ENCODE measurements at regions of chr13 and their contacts with region 1.

Region 1: DNA sequence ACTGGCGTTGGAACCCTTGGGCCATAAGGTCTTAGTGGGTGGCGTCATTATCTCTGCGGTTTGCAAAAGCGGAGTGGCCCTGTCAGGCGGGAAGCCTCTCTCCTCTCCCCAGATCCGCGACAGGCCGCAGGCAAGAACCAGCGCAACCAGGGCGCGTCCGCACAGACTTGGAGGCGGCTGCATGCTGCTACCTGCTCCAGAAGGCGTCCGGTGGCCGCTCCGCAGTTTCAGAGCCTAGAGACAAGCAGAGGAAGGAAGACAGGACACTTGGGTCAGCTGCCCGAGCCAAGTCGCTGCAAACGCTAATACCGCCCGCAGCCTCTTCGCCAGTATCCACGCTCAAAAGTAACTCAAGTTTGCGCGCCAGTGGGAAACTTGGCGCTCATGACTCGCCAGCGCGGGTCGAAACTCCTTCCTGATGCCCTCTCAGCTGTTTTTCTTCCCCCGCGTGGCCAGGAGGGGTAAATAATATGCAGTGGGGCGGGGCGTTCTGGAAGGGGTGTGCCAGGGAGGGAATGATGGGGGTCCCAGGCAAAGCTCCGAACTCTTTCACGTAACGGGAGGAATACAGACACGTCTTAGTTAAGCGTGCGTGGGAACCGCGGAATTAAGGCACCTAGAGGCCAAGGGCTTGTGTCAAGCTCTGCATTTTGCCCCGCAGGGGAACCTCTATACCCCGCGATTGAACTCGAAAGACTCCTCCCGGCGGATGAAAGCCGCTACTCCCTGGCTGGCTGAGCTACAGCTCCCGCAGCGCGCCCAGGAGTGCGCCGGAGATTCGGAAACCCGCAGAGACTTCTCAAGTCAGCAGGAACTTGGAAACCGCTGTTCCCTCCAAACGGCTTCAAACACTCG is at the start of gene EDNRB:
- DNase-seq: peak; percentile 56 to 75 (median 64)
- ATAC-seq: peak; percentile 65 to 73 (median 72)
- H3K4me3 ChIP-seq: peak within 1 kb of the TSS; percentile 60 to 85 (median 70)
- H3K27ac ChIP-seq: peak within 1 kb of the TSS; percentile 58 to 87 (median 80)
- H3K4me1 ChIP-seq: peaks cover 0 to 16% (median 2%) of the 10 kb centered on the region in 12 donors
- H3K27me3 ChIP-seq: peaks cover 0 to 16% (median 0%) of the 10 kb centered on the region in 9 donors
- CTCF ChIP-seq: peak in 7 of 12 donors; percentile 8 to 33 (median 18)
- POLR2A ChIP-seq: peak in 1 of 2 donors; percentile 35
- total RNA-seq, gene EDNRB: 9.8 to 72.0 (median 26.9) TPM

Region 2: GRCh38 chr13:77779552-77780272 is 138.9 kb before region 1 on chr13:
- intact Hi-C with region 1: loop called in 1 of 10 experiments (anchors 5 kb)
- DNase-seq: peak in 2 of 5 donors; percentile 31 to 34
- ATAC-seq: peak in 3 of 4 donors; percentile 70 to 75 (median 71)
- H3K4me3 ChIP-seq: no peak overlapping the region
- H3K27ac ChIP-seq: peak overlapping the region in 1 of 12 donors; percentile 65
- H3K4me1 ChIP-seq: peaks cover 0 to 9% (median 0%) of the 10 kb centered on the region in 12 donors
- H3K27me3 ChIP-seq: no peaks in the 10 kb centered on the region
- CTCF ChIP-seq: peak; percentile 58 to 89 (median 74)
- POLR2A ChIP-seq: no peak

Region 3: DNA sequence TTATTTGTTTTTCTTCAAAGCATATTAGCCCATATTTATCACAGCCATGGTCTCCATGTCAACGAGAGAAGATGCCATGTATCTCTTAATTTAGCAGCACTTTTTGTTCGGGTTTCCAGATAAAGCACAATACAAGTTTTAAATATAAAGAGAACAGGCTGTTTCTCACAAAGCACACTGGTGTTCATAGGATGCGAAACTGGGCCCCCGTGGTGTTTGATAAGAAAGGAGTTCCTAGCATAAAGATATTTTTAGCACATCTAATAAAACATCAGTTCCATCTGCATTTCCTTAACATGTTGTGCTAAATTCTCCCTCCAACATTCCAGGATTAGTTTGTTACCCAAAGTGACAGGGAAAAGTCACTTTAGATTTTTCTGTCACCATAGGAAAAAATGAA is 72.4 kb after region 1 on chr13:
- intact Hi-C with region 1: loop called in 2 of 10 experiments (anchors 5 kb)
- DNase-seq: peak in 3 of 5 donors; percentile 30 to 34 (median 34)
- ATAC-seq: peak; percentile 36 to 67 (median 48)
- H3K4me3 ChIP-seq: no peak overlapping the region
- H3K27ac ChIP-seq: peak overlapping the region in 4 of 12 donors; percentile 4 to 54 (median 38)
- H3K4me1 ChIP-seq: peaks cover 0 to 35% (median 10%) of the 10 kb centered on the region in 12 donors
- H3K27me3 ChIP-seq: no peaks in the 10 kb centered on the region
- CTCF ChIP-seq: no peak
- POLR2A ChIP-seq: no peak

Region 4: DNA sequence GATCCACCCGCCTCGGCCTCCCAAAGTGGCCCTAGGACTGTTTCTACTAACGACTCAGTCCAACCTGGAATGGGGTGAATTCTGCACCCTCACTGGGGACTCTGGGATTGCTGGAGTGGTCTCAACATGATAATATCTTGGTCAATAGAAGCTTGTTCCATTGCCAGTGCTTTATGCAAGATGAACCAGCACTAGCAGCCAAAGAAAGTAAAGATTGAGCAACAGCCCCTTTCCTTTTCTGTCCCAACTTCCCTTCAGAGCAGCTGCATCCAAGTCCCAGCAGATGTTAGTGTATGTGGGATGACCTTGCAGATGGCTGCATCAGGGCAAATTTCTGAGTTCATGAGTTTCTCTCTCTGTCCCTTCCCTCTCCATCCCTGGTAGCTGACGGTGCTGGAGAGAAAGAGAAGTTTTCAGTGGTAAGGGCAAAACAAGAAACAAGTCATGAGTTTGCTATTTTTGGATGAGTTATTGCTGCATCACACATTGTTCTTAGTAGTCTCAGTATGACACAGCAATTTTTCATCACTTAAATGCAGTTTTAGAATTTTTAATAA is 183.6 kb after region 1 on chr13:
- intact Hi-C with region 1: loop called in 1 of 10 experiments (anchors 10 kb)
- DNase-seq: peak in 4 of 5 donors; percentile 26 to 59 (median 52)
- ATAC-seq: peak; percentile 78 to 98 (median 94)
- H3K4me3 ChIP-seq: no peak overlapping the region
- H3K27ac ChIP-seq: peak overlapping the region in 7 of 12 donors; percentile 11 to 46 (median 13)
- H3K4me1 ChIP-seq: peaks cover 0 to 4% (median 0%) of the 10 kb centered on the region in 12 donors
- H3K27me3 ChIP-seq: no peaks in the 10 kb centered on the region
- CTCF ChIP-seq: no peak
- POLR2A ChIP-seq: no peak

Region 5: GRCh38 chr13:78121459-78122348 is 203.1 kb after region 1 on chr13:
- intact Hi-C with region 1: loop called in 1 of 10 experiments (anchors 5 kb)
- DNase-seq: peak in 3 of 5 donors; percentile 30 to 43 (median 42)
- ATAC-seq: peak in 2 of 4 donors; percentile 47 to 65
- H3K4me3 ChIP-seq: peak overlapping the region in 2 of 12 donors; percentile 19 to 21
- H3K27ac ChIP-seq: no peak overlapping the region
- H3K4me1 ChIP-seq: peaks cover 0 to 8% (median 0%) of the 10 kb centered on the region in 12 donors
- H3K27me3 ChIP-seq: peaks cover 0 to 3% (median 0%) of the 10 kb centered on the region in 9 donors
- CTCF ChIP-seq: peak; percentile 82 to 96 (median 90)
- POLR2A ChIP-seq: no peak